CD4-positive, alpha-beta memory T cell (primary cell): ENCODE measurements at regions of chr2 and their contacts with region 1.

Region 1: DNA sequence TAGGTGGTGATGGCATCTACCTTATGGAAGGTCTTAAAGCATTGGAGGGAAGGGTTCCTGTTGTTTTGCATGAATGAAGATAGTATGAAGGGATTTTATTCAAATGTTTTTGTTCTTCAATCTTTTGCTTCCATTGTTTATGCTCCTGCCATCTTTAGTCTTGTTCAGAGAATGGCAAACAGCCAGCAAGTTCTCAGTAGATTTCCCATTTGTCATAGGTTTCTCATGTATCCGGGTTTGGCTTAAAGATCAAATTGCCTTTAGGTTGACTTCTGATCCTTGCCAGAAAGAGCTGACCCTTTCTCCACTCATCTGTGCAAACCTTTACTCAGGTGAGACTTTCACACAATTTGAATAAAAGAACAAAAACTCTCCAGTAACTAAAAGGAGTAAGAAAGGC is 44.2 kb upstream of the STAT4 start:
- DNase-seq: no peak
- H3K4me3 ChIP-seq: no peak overlapping the region
- H3K4me3 Mint-ChIP-seq: peak overlapping the region in 1 of 8 donors; percentile 55
- H3K27ac ChIP-seq: peak overlapping the region; percentile 31
- H3K27ac Mint-ChIP-seq: peak overlapping the region in 6 of 7 donors; percentile 65 to 90 (median 88)
- H3K4me1 ChIP-seq: peaks cover 32% of the 10 kb centered on the region
- H3K4me1 Mint-ChIP-seq: peaks cover 23 to 47% (median 36%) of the 10 kb centered on the region in 4 donors
- H3K27me3 ChIP-seq: no peaks in the 10 kb centered on the region
- H3K27me3 Mint-ChIP-seq: no peaks in the 10 kb centered on the region

Region 2: DNA sequence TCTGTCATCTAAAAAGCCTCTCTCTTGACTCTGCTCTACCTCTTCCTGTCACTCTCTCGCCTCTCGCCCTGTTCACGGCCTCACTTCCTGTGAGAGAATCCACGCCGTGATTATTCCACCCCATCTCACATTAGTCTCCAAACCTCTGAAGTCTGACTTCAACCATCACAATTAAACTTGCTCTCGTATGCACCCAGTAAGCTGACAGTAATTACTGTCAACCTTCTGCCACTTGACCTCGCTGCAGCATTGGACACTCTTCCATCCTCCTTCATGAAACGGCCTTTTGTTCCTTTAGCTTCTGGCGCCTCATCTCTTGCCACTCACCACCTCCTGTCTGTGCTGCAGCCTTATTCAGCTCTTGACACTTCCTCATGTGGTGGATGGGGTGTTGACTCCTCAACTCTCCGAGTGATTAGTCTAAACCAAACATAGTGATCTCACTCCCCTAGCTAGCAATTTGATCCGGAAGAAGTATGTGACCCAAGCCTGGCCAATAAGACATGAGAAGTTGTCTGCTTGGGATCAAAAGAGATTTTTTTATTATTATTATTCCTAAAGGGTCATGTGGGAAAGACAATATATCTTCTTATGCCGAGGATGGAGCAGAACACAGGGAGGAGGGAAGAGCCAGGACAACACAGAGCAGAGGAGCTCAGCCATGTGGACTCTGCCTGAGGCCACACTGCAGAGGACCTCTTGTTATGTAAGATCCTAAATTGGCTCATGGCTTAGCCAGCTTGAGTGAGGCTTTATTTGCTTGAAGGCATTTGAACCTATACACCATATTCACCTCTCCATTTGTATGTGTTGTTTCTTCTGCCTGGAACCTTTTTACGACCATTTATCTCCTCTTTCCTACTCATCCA is 11.8 kb after region 1 on chr2:
- CTCF ChIA-PET with region 1: interaction called, 5 read pairs
- POLR2A ChIA-PET with region 1: interaction called, 14 read pairs
- intact Hi-C with region 1: no loop called
- DNase-seq: peak; percentile 37 to 68 (median 49)
- H3K4me3 ChIP-seq: peak overlapping the region in 1 of 2 donors; percentile 27
- H3K4me3 Mint-ChIP-seq: peak overlapping the region; percentile 72 to 86 (median 79)
- H3K27ac ChIP-seq: peak overlapping the region; percentile 46
- H3K27ac Mint-ChIP-seq: peak overlapping the region; percentile 84 to 91 (median 89)
- H3K4me1 ChIP-seq: peaks cover 44% of the 10 kb centered on the region
- H3K4me1 Mint-ChIP-seq: peaks cover 31 to 48% (median 39%) of the 10 kb centered on the region in 4 donors
- H3K27me3 ChIP-seq: no peaks in the 10 kb centered on the region
- H3K27me3 Mint-ChIP-seq: no peaks in the 10 kb centered on the region